HEK293 (cell line): ENCODE measurements at regions of chr10 and their contacts with region 1.

Region 1: GRCh38 chr10:50624866-50625692 is 1.3 kb upstream of the SGMS1 start:
- H3K4me3 ChIP-seq: peak overlapping the region; percentile 90
- H3K27ac ChIP-seq: peak overlapping the region; percentile 84
- H3K4me1 ChIP-seq: peaks cover 10% of the 10 kb centered on the region
- CTCF ChIP-seq: peak; percentile 82

Region 2: DNA sequence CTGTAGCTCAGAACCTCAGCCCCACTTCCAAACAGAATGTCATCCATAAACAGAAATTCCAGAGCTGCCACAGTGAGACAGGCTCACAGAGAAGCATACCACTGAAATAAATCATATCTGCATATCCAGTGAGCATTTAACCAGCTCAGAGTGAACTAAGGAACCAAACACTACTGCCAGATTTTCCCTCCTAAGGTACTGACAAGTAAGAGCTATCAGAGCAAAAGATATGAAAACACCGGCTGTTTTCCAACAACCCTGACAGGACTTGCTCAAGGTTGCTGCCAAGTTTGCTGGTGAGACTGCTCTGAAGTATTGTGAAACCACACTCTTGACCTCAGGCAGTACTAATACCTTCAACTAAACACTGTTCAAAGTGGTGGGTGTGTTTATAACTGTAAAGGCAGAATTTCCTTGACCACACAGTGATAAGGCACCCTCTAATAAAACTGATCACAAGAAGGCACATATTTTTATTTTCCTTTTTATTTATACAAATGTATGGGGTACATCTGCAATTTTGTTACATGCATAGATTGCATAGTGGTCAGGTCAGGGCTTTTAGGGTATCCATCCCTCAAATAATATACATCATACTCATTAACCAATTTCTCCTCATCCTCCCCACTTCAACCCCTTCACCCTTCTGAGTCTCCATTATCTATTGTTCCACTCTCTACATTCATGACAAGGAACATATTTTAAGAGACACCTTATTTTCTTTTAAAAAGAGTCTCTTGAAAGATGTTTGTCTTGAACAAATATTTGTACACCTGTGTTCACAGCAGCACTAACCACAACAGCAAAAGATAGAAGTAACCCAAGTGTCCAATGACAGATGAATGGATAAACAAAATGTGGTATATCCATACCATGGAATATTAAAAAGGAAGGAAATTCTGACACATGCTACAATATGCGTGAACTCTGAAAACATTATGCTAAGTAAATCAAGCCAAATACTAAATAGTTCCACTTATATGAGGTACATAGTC is 19.5 kb before region 1 on chr10:
- CTCF ChIA-PET with region 1: interaction called, 3 read pairs
- POLR2A ChIA-PET with region 1: interaction called, 11 read pairs
- H3K4me3 ChIP-seq: no peak overlapping the region
- H3K27ac ChIP-seq: peak overlapping the region; percentile 52; the same call in 1 of the 2 replicates
- H3K4me1 ChIP-seq: peaks cover 28% of the 10 kb centered on the region
- CTCF ChIP-seq: no peak